Activated CD4-positive, alpha-beta memory T cell treated with anti-CD3 and anti-CD28 coated beads for 36 hours (primary cell): ENCODE measurements at regions of chr7 and their contacts with region 1.

Region 1: GRCh38 chr7:102236592-102237287 is 49.9 kb upstream of the SH2B2 start:
- DNase-seq: peak; percentile 60
- H3K4me3 Mint-ChIP-seq: no peak overlapping the region
- H3K27ac Mint-ChIP-seq: no peak overlapping the region
- H3K4me1 Mint-ChIP-seq: no peaks in the 10 kb centered on the region
- H3K27me3 Mint-ChIP-seq: no peaks in the 10 kb centered on the region

Region 2: DNA sequence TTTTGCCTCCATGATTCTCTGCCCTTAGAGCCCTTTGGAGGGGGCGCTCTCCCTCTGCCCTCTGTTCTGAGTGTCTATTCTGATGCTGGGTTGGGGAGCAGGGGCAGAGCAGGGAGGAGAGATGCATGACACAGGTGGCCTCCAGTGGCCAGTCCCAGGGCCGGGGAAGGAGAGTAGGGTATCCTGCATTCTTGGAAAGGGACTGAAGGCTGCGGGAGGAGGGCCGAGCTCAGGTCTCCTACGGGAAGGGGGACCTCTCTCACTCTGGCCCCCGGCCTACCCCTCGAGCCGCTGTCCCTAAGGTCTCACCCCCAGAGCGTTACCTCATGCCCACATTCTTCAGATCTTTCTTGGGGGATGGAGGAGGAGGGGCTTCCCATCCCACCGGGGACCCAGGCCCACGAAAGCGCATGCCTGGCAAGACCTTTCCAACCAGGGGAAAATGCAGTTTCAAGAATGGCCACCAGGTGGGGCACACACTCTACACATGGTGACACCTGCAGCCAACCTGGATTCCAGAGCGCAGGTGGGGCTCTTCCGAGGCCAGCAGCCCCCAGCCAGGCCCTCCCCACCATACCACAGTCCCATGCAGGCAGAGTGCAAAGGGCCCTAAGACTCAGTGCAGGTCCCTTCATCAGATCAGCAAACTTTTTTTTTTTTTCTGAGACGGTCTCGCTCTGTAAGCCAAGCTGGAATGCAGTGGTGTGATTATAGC is 694.1 kb before region 1 on chr7:
- CTCF ChIA-PET with region 1: interaction called, 7 read pairs
- POLR2A ChIA-PET with region 1: no interaction called
- intact Hi-C with region 1: loop called (anchors 1 kb)
- DNase-seq: peak; percentile 79
- H3K4me3 Mint-ChIP-seq: no peak overlapping the region
- H3K27ac Mint-ChIP-seq: no peak overlapping the region
- H3K4me1 Mint-ChIP-seq: peaks cover 3% of the 10 kb centered on the region
- H3K27me3 Mint-ChIP-seq: no peaks in the 10 kb centered on the region

Region 3: DNA sequence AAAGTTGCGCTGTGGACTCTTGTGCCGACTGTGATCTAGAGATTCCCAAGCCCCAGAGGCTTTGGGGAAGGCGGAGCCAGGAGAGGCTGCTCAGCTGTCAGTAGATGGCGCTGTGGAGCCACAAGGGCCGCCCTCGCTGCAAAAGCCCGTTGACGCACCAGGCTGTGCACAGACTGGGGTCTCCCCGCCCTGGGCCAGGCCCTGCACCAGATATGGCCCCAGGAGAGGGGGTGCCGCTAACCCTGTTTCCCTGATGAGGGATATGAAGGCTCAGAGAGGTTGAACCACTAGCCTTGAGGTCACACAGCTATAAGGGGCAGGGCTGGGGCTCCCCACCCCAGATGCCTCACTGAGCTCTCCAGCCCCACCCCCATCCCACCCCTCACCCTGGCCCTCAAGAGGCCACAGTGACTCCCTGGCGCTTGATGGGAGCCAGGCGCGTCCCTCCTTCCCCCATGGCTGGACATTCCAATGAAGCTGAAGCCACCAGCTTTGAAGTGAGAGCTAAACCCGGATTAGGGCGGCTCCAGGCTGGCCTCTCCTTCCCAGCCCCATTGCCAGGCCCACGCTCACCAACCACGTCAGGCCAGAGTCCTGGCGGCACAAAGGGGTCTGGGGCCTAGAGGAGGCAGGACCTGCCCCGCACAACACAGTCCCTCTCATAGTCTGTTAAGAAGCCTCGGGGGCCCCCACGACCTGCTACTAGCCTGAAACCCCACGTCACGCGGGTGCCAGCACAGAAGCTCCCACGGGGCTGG is 634.1 kb before region 1 on chr7:
- CTCF ChIA-PET with region 1: interaction called, 23 read pairs
- POLR2A ChIA-PET with region 1: no interaction called
- intact Hi-C with region 1: loop called (anchors 1 kb)
- DNase-seq: peak; percentile 80
- H3K4me3 Mint-ChIP-seq: no peak overlapping the region
- H3K27ac Mint-ChIP-seq: no peak overlapping the region
- H3K4me1 Mint-ChIP-seq: no peaks in the 10 kb centered on the region
- H3K27me3 Mint-ChIP-seq: no peaks in the 10 kb centered on the region

Region 4: DNA sequence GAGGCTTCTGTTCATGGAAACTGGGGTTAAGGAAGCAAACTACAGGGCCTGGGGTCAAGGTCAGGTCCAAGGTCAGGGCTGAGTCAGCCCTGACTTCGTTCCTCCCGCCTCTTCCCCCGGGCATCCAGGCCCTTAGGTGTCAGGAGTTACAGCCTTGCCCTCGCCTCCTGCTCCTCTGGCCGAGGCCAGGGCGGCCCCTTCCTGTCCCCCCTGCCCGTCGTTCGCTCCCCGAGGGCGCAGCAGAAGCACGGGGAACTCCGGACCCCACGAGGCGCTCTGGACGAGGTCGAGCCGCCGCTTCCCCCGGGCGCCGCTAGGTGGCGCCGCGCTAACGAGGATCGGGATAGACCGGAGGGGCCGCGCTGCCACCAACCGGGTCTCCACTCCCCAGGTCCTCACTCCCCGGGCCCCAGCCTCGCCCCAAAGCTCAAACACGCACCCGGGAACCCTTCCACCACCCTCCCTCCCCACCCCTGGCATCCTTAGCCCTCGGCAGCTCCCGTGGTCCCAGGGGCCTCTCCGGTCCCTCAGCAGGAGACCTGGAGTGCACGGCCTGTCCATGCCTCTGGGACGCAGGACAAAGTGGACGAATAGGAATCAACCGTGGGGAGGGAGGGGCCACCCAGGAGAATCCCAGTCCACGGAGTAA is 548.4 kb before region 1 on chr7:
- CTCF ChIA-PET with region 1: interaction called, 5 read pairs
- POLR2A ChIA-PET with region 1: interaction called, 3 read pairs
- intact Hi-C with region 1: loop called (anchors 5 kb)
- DNase-seq: peak; percentile 83
- H3K4me3 Mint-ChIP-seq: no peak overlapping the region
- H3K27ac Mint-ChIP-seq: no peak overlapping the region
- H3K4me1 Mint-ChIP-seq: no peaks in the 10 kb centered on the region
- H3K27me3 Mint-ChIP-seq: peaks cover 1% of the 10 kb centered on the region

Region 5: DNA sequence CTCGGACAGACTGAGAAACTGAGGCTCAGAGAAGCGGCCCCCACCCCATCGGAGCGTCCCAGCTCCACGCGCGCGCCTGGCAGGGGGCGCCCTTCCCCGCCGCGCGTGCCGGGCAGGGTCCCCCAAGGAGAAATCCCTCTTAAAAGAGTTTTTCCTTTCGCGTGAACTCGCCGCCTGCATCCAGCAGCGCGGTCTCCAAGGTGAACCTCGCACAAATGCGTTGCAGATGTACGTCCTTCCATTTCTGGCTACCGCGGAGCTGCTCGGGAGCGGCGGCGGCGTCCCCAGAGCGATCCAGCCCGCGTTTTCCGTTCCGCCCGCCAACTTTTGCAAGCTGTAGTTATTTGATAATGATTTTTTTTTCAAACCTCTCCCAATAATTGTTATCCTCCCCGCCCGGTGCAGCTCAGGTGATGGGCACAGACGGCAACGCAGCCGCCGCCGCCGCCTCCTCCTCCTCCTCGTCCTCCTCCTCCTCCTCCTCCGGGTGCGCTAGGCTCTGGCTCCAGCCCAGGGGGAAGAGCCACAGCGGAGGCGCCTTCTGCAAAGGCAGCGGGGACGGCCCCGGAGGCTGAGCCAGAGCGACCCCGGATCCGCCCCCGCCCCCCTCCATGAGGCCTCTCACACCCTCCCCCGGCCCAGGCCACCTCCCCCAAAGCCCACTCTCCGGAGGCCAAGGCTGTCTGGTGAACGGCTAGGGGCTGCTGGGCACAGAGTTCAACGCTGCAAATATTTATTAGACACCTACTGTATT is 493.3 kb before region 1 on chr7:
- CTCF ChIA-PET with region 1: no interaction called
- POLR2A ChIA-PET with region 1: no interaction called
- intact Hi-C with region 1: loop called (anchors 1 kb)
- DNase-seq: peak; percentile 69
- H3K4me3 Mint-ChIP-seq: peak overlapping the region; percentile 69
- H3K27ac Mint-ChIP-seq: no peak overlapping the region
- H3K4me1 Mint-ChIP-seq: peaks cover 9% of the 10 kb centered on the region
- H3K27me3 Mint-ChIP-seq: peaks cover 4% of the 10 kb centered on the region

Region 6: GRCh38 chr7:101815835-101816493 is 420.8 kb before region 1 on chr7:
- CTCF ChIA-PET with region 1: no interaction called
- POLR2A ChIA-PET with region 1: no interaction called
- intact Hi-C with region 1: loop called (anchors 2 kb)
- DNase-seq: peak; percentile 73
- H3K4me3 Mint-ChIP-seq: peak overlapping the region; percentile 76
- H3K27ac Mint-ChIP-seq: peak overlapping the region; percentile 74
- H3K4me1 Mint-ChIP-seq: peaks cover 20% of the 10 kb centered on the region
- H3K27me3 Mint-ChIP-seq: peaks cover 2% of the 10 kb centered on the region